ENCODE measurements at regions of chr1 and their contacts with region 1.

Region 1: DNA sequence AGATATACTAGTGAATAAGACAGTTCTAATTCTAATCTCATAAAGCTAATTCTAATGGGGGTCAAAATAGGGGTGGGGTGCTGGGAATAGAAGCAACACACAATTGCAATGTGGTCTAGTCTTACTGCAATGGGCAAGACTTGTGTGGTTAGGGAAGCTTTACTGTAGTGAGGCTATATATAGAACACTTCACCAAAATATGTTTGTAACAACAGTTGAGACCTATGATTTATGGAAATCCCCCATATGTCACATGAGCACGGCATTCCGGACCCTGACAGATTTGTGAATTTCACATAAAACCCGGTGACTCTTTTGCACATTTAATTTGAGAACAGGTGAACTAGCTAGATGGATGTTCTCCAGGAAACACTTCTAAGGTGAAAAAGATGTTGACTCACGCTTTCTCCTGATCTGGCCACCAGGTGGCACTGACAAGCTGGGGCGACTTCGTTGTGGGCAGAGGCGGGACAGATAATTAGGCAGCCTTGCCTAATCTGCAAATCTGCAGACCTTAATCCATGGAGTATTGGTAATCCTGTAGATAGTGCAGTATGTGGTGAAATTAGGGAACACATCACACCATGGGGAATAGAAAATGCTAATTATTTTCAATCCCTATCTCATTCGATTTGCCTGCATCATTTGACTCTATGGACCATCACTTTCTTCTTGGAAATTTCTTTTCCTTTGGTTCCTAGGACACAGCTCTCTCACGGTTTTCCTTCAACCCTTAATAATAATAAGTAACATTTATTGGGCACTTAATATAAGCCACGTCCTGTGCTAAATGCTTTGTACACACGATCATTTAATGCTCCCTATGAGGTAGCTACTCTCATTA is 37.7 kb downstream of the KIAA0040 start:
- DNase-seq: peak; percentile 82
- H3K4me3 Mint-ChIP-seq: no peak overlapping the region
- H3K27ac Mint-ChIP-seq: no peak overlapping the region
- H3K4me1 Mint-ChIP-seq: peaks cover 17% of the 10 kb centered on the region
- H3K27me3 Mint-ChIP-seq: peaks cover 41% of the 10 kb centered on the region
- CTCF ChIP-seq: peak; percentile 95

Region 2: DNA sequence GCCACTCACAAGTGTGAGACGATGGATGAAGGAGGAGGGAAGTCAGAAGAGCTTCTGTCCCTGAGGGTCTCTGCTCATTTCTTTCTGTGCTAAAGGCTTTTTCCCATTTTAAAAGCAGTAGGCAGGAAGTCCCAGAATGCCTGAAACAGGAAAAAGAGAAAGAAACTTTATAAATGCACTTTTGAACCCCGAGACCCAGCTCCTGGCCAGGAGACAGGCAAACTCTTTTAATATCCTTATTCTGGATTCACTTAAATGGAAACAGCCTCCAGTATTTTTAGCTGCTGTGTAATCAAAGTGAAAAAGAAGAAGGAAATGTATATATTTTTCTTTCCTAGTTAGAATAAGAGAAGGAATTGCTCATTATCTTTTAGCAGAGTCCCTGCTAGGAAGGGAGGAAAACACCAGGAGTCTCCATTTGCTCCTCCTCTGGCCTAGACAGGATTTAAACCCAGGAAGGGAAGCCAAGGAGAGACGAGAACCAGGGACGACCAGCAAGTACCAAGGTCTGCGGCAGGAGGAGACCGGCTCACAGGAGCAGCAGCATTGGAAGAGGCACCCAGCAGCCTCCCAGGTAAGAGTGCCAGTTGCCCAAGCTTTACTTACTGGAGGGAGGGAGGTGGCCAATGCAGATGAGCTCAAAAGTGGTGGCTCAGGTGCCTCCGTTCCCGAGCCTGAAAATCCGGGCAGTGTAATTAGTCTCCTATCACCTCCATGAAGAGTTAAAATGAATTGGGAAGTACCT is 87.3 kb before region 1 on chr1 and contains the start of gene TNN:
- CTCF ChIA-PET with region 1: no interaction called
- POLR2A ChIA-PET with region 1: no interaction called
- intact Hi-C with region 1: no loop called
- DNase-seq: no peak
- H3K4me3 Mint-ChIP-seq: no peak within 1 kb of the TSS
- H3K27ac Mint-ChIP-seq: no peak within 1 kb of the TSS
- H3K4me1 Mint-ChIP-seq: no peaks in the 10 kb centered on the region
- H3K27me3 Mint-ChIP-seq: peaks cover 48% of the 10 kb centered on the region
- CTCF ChIP-seq: no peak
- total RNA-seq, gene TNN: not detected in 2 replicates

Region 3: DNA sequence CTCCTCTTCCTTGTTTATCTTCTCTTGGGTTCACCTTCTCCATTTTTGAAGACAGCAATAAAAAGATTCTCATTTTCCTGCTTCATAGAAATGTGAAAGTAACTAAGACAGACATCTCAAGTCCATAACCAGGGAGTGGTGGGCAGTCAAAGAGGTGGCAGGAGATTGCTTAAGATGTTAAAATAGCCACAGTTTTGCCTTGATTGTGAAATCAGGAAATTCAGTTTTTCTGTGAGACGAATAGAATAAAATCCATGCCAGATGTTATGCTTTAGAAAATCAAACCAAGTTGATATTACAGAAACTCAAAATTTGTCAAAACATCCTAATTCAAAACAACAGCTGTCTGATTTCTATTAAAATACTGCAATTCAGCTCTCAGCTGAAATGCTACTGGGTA is 30.0 kb before region 1 on chr1:
- CTCF ChIA-PET with region 1: interaction called, 24 read pairs
- POLR2A ChIA-PET with region 1: no interaction called
- intact Hi-C with region 1: no loop called
- DNase-seq: peak; percentile 36
- H3K4me3 Mint-ChIP-seq: no peak overlapping the region
- H3K27ac Mint-ChIP-seq: no peak overlapping the region
- H3K4me1 Mint-ChIP-seq: peaks cover 13% of the 10 kb centered on the region
- H3K27me3 Mint-ChIP-seq: no peaks in the 10 kb centered on the region
- CTCF ChIP-seq: no peak

Region 4: DNA sequence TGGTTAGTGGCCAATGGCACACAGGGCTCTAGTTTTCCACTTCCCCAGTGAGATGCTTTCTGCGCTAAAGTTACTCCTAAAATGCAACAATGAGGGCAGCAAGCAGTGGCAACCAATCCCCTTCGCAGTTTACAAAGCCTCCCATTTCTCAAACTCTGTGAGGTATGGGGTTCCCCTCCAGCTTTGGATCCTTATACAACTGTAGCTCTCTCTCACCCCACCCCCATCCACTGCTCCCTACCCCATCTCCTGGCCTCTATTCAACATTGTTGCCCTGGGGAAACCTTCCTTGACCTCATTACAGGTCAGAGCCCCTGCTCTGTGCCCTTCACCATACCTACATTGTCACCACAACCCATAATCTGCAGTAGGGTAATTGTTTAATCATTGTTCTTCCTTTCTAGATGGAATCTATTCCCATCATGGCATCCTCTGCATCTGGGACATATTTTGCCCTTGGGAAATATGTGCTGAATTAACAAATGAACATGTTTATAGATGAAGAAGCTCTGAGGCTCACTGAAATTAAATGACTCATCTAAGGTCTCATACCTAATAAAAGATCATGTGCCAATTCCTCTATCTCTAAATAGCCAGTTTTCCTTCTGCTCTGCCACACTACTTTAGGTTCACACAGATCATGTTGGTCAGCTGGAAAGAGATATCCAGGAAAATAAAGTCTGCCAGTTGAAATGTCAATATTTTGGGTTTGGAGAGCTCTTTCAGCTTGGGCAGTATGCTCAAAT is 25.2 kb after region 1 on chr1:
- CTCF ChIA-PET with region 1: interaction called, 415 read pairs
- POLR2A ChIA-PET with region 1: interaction called, 5 read pairs
- intact Hi-C with region 1: no loop called
- DNase-seq: peak; percentile 25
- H3K4me3 Mint-ChIP-seq: no peak overlapping the region
- H3K27ac Mint-ChIP-seq: no peak overlapping the region
- H3K4me1 Mint-ChIP-seq: peaks cover 8% of the 10 kb centered on the region
- H3K27me3 Mint-ChIP-seq: no peaks in the 10 kb centered on the region
- CTCF ChIP-seq: no peak

Region 5: GRCh38 chr1:175221666-175222175 is 66.9 kb after region 1 on chr1:
- CTCF ChIA-PET with region 1: interaction called, 306 read pairs
- POLR2A ChIA-PET with region 1: interaction called, 13 read pairs
- intact Hi-C with region 1: loop called (anchors 1 kb)
- DNase-seq: peak; percentile 91
- H3K4me3 Mint-ChIP-seq: no peak overlapping the region
- H3K27ac Mint-ChIP-seq: no peak overlapping the region
- H3K4me1 Mint-ChIP-seq: peaks cover 27% of the 10 kb centered on the region
- H3K27me3 Mint-ChIP-seq: no peaks in the 10 kb centered on the region
- CTCF ChIP-seq: peak; percentile 45

Region 6: DNA sequence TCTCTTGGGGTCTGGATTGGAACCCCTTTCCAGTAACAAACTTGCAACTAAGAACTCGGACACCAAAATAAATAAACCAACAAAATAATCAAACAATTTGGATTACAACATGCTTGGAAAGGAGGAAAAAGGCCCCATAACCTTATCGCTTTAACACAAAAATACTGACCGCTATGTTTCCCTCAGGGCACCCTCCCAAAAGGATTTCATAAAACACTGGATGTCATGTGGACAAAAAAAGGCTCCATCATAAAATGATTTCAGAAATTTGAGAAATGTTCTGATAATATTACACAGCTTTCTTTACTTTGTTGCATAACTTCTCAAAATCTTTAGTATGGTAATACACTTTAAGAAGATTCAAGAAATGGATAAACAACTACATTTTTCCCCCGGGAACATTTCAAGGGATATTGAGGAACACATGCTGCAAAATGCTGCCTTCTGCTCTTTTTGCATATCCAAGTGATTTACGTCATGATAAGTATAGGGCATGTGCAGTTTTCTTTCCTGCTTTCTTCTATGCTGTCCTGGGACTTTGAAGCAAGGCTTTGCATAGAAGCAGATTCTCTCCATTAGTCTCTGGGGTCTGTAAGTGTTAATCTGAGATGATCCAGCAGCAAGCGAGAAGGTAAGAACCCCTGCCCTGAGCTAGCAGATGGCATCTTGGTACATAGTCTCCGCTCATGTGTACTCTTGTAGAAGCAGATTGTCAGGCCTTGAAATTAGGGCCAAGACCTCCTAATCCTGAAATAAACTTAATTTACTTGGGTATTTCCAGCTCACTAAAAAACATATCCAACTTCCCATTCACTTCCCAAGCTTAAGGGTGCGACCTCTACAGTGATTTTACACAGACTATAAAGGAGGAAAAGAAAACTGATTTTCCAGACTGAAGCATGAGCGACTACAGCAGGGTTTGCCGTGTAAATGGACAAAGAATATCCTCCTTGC is 123.2 kb after region 1 on chr1:
- CTCF ChIA-PET with region 1: interaction called, 10 read pairs
- POLR2A ChIA-PET with region 1: no interaction called
- intact Hi-C with region 1: no loop called
- DNase-seq: no peak
- H3K4me3 Mint-ChIP-seq: no peak overlapping the region
- H3K27ac Mint-ChIP-seq: no peak overlapping the region
- H3K4me1 Mint-ChIP-seq: no peaks in the 10 kb centered on the region
- H3K27me3 Mint-ChIP-seq: no peaks in the 10 kb centered on the region
- CTCF ChIP-seq: no peak

Region 7: GRCh38 chr1:175338387-175339135 is 183.7 kb after region 1 on chr1:
- CTCF ChIA-PET with region 1: interaction called, 25 read pairs
- POLR2A ChIA-PET with region 1: no interaction called
- intact Hi-C with region 1: no loop called
- DNase-seq: peak; percentile 48
- H3K4me3 Mint-ChIP-seq: no peak overlapping the region
- H3K27ac Mint-ChIP-seq: no peak overlapping the region
- H3K4me1 Mint-ChIP-seq: no peaks in the 10 kb centered on the region
- H3K27me3 Mint-ChIP-seq: peaks cover 52% of the 10 kb centered on the region
- CTCF ChIP-seq: peak; percentile 56

Region 8: DNA sequence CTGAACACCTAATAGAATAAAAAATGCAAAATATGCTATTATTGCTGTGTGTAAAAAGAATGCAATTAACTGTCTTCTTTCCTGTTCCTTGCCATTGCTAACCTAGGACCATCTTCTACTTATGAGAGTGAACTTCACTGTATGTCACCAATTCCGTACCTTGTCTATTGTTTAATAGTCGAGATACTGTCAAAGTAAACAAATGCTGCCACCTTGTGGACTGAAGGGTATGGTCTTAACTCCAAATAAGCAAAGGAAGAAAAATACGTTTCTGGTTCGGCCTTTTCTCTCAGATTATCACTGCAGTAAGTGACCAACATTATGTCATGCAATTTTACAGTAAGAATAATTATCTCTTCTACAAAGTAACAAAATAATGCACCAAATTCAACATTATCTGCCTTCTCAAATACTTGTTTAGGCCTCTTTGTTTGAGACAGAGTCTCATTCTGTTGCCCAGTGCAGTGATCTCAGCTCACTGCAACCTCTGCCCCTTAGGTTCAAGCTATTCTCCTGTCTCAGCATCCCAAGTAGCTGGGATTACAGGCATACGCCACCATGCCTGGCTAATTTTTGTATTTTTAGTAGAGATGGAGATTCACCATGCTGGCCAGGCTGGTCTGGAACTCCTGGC is 918.8 kb after region 1 on chr1:
- CTCF ChIA-PET with region 1: interaction called, 23 read pairs
- POLR2A ChIA-PET with region 1: no interaction called
- intact Hi-C with region 1: loop called (anchors 5 kb)
- DNase-seq: peak; percentile 85
- H3K4me3 Mint-ChIP-seq: no peak overlapping the region
- H3K27ac Mint-ChIP-seq: no peak overlapping the region
- H3K4me1 Mint-ChIP-seq: peaks cover 6% of the 10 kb centered on the region
- H3K27me3 Mint-ChIP-seq: no peaks in the 10 kb centered on the region
- CTCF ChIP-seq: peak; percentile 74

Measured in MCF 10A (cell line).